Activated CD8-positive, alpha-beta T cell treated with anti-CD3 and anti-CD28 coated beads, Interleukin-2, amount 10 ng/mL, durations not matched to agents 7 days and 5 days (primary cell): ENCODE measurements at regions of chr3 and their contacts with region 1.

Region 1: GRCh38 chr3:186259612-186260383 is 102.2 kb downstream of the DGKG start:
- DNase-seq: peak; percentile 68
- ATAC-seq: peak; percentile 96
- H3K4me3 Mint-ChIP-seq: no peak overlapping the region
- H3K27ac Mint-ChIP-seq: no peak overlapping the region
- H3K4me1 Mint-ChIP-seq: peaks cover 11% of the 10 kb centered on the region
- H3K27me3 Mint-ChIP-seq: no peaks in the 10 kb centered on the region

Region 2: DNA sequence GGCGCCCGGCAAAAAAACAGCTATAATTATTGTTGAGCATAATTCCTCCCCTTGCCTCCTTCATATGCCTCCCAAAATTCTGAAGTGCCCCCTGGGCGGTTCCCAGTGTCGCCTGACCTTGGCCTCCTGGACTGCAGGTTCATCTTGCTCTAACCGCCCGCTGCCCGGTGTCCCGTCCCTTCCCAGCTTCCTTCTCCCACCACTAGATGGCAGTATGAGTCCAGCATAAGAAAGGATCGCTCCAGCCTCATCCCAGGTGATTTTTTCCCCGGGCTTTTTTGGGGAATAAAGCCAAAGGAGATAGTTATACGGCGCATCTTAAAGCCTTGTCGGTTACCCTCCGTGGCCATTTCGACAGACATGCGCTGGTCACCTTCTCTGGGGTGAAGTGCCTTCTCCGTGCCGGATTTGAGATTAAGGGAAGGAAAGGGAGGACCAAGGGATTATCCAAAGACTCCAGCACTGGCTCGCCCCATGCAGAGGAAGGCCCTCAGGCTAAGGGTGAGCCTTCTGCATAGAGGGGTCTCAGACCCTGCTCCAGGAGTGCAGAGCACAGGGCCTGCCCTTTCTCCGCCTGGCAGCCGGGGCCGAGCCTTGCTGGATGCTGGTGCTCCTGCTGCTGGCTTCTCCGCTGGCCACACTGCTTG is 276.2 kb before region 1 on chr3:
- CTCF ChIA-PET with region 1: interaction called, 11 read pairs
- POLR2A ChIA-PET with region 1: no interaction called
- DNase-seq: peak; percentile 61
- ATAC-seq: peak; percentile 83
- H3K4me3 Mint-ChIP-seq: no peak overlapping the region
- H3K27ac Mint-ChIP-seq: no peak overlapping the region
- H3K4me1 Mint-ChIP-seq: peaks cover 4% of the 10 kb centered on the region
- H3K27me3 Mint-ChIP-seq: peaks cover 17% of the 10 kb centered on the region

Region 3: DNA sequence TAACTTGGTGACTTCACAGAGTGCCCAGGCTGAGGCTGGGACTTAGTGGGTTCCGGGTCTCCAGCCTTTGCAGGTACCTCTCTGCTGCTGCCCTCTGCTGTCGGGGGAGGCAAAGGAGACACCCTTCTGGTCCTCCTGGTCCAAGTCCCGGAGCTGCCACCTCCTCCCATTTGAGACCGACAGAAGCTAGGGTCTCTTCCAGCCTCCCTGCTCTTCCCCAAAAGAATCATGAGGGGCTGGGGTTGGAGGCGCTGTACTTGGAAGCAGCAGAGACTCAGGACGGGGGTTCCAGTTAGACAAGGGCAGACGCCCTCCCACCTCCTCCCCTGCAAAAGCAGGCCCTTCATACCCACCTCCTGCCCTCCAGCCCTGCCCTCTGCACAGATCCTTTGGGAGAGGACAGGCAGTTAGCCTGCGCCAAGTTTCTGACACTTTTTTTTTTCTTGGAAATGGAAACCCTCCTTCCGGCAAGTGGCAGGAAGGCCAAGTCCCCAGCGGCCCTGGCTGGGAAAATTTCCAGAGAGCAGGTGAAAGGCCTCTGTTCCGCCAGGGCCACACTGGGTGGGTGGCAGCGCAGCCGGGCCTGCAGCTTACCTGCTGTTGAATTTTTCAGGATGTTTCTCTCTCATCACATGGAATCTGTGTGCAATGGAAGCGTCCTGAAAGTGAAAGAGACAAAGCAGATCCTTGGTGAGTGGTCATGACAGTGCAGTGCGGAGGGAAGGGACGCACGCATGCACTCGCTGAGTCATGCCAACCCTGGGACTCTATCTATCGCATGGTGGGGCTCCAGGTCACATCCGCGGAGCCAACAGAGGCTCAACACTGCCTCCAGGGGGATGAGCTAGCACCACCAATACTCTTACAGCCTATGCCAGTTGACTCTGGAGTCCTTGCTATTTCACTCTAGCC is 17.6 kb before region 1 on chr3:
- CTCF ChIA-PET with region 1: interaction called, 20 read pairs
- POLR2A ChIA-PET with region 1: no interaction called
- DNase-seq: peak; percentile 80
- ATAC-seq: peak; percentile 97
- H3K4me3 Mint-ChIP-seq: no peak overlapping the region
- H3K27ac Mint-ChIP-seq: no peak overlapping the region
- H3K4me1 Mint-ChIP-seq: peaks cover 18% of the 10 kb centered on the region
- H3K27me3 Mint-ChIP-seq: peaks cover 11% of the 10 kb centered on the region

Region 4: DNA sequence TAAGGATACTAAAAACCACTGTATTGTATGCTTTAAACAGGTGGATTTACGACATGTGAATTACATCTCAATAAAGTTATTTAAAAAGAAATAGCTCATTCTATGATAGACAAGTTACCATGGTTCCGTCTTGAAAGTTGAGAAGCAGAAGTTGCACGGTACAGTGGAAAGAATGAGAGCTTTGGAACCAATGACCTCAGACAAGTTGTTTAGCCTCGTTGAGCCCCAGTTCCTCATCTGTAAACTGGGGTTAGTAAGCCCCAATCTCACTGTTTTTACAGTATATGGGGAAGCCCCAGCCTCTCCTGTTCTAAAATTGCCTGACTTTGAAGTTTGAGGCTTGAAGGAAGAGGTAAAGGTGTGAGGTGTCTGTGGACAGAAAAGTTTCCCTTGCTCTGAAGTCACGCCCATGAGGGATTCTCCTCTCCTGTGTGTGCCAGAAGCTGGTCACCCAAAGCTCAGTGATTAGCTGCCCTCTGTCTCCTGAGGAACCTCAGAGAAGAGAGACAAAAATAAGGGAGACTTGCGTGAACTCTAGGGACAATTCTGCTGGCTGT is 274.4 kb after region 1 on chr3:
- CTCF ChIA-PET with region 1: interaction called, 179 read pairs
- POLR2A ChIA-PET with region 1: no interaction called
- DNase-seq: peak; percentile 57
- ATAC-seq: peak; percentile 95
- H3K4me3 Mint-ChIP-seq: no peak overlapping the region
- H3K27ac Mint-ChIP-seq: no peak overlapping the region
- H3K4me1 Mint-ChIP-seq: peaks cover 35% of the 10 kb centered on the region
- H3K27me3 Mint-ChIP-seq: no peaks in the 10 kb centered on the region